ENCODE measurements at regions of chr2 and their contacts with region 1.

Region 1: GRCh38 chr2:217105733-217106649 is 246.1 kb upstream of the TNP1 start:
- DNase-seq: peak; percentile 91
- H3K4me3 ChIP-seq: no peak overlapping the region
- H3K27me3 ChIP-seq: no peaks in the 10 kb centered on the region
- CTCF ChIP-seq: no peak

Region 2: DNA sequence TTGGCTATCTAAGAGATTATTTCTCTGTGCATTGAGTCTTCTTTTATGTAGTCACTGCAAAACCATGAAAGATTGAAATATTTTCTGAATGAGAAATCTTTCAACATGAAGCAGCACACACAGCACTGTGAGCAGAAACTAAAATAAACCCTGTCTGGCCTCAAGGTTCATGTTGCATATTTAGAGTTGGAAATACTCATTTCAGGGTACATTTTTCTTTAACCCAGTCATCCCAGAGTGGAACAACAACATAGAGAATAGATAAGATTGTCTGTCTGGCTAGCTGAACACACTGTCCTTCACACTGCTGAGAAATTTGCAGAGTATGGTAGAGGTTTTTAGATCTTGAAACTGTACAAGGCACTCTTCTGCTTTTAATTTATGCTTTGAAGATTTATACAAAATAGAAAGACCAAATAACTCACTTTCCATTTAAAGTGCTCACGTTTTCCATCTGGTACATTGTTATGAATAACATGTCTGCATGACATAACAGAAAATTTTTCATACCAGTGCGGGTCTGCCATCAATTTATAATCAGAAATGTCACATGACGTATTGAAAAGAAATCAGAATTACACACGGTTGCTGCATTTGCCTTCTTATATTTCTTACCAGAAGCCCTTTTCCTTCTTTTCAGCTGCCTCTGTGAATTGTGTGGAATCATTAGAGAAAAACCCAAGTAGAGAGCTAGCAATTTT is 1645.2 kb before region 1 on chr2:
- CTCF ChIA-PET with region 1: no interaction called
- POLR2A ChIA-PET with region 1: interaction called, 17 read pairs
- DNase-seq: peak; percentile 77
- H3K4me3 ChIP-seq: no peak overlapping the region
- H3K27me3 ChIP-seq: no peaks in the 10 kb centered on the region
- CTCF ChIP-seq: no peak

Region 3: DNA sequence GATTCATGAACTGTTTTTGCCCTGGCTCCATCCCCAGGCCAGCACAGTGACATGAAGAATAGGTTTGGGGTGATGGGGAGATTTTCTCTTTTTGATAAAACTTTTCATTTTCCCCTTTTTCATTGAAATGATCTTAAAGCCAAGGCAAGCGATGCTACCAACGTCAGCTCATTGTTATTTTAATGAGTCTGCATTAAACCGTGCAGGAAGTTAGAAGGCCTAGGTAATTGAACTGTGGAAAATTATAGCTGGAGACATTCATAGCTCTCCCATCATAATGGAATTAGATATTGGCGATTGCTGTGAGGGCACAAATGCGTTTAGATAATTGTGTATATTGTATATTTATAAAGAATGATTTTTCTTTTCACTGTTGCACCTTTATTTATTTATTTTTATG is 660.5 kb before region 1 on chr2:
- CTCF ChIA-PET with region 1: no interaction called
- POLR2A ChIA-PET with region 1: no interaction called
- DNase-seq: no peak
- H3K4me3 ChIP-seq: no peak overlapping the region
- H3K27me3 ChIP-seq: no peaks in the 10 kb centered on the region
- CTCF ChIP-seq: no peak

Region 4: GRCh38 chr2:216717491-216717901 is 388.5 kb before region 1 on chr2:
- CTCF ChIA-PET with region 1: no interaction called
- POLR2A ChIA-PET with region 1: no interaction called
- DNase-seq: no peak
- H3K4me3 ChIP-seq: no peak overlapping the region
- H3K27me3 ChIP-seq: no peaks in the 10 kb centered on the region
- CTCF ChIP-seq: no peak

Region 5: GRCh38 chr2:217008794-217009193 is 97.2 kb before region 1 on chr2:
- CTCF ChIA-PET with region 1: no interaction called
- POLR2A ChIA-PET with region 1: no interaction called
- DNase-seq: no peak
- H3K4me3 ChIP-seq: no peak overlapping the region
- H3K27me3 ChIP-seq: peaks cover 5% of the 10 kb centered on the region; the same call in 1 of the 2 replicates
- CTCF ChIP-seq: no peak

Region 6: DNA sequence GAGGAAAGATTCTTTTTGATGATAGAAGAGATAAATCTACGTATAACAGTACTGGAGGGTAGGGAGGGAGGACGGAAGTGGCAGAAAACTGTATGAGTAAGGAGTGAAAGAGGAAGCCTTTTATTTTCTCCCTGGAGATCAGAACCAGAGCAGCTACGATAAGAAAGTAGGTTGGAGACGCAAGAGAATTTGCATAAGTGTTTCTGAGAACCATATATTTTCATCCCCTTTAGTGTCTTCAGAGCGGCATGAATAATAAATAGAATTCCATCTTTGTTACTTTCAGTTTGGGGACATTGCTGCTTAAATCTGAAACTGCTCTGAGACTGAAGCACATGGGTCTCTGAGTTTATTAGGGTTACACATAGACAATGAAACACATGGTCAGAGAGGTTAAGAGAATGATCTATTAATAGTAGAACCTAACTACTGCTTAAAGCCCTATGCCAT is 15.9 kb before region 1 on chr2:
- CTCF ChIA-PET with region 1: interaction called, 9 read pairs
- POLR2A ChIA-PET with region 1: interaction called, 21 read pairs
- DNase-seq: no peak
- H3K4me3 ChIP-seq: no peak overlapping the region
- H3K27me3 ChIP-seq: no peaks in the 10 kb centered on the region
- CTCF ChIP-seq: no peak